ENCODE measurements at regions of chr7 and their contacts with region 1.

Region 1: GRCh38 chr7:100101016-100101862 is at the starts of genes AP4M1 and MCM7:
- DNase-seq: peak; percentile 98 to 100 (median 99)
- ATAC-seq: peak; percentile 95
- H3K4me3 ChIP-seq: peak within 1 kb of the TSS; percentile 98
- H3K27ac ChIP-seq: peak within 1 kb of the TSS; percentile 100
- H3K4me1 ChIP-seq: peaks cover 9 to 35% of the 10 kb centered on the region in 2 experiments; a peak in 4 of 5 replicates
- H3K27me3 ChIP-seq: no peaks in the 10 kb centered on the region
- CTCF ChIP-seq: peak in 1 of 3 experiments; percentile 7; a peak in 1 of 6 replicates
- EP300 ChIP-seq: peak; percentile 15
- POLR2A ChIP-seq: peak; percentile 96
- RAD21 ChIP-seq: no peak
- polyA plus RNA-seq, gene AP4M1: 1.3 to 3.6 TPM
- polyA plus RNA-seq, gene MCM7: 407 to 856 TPM

Region 2: DNA sequence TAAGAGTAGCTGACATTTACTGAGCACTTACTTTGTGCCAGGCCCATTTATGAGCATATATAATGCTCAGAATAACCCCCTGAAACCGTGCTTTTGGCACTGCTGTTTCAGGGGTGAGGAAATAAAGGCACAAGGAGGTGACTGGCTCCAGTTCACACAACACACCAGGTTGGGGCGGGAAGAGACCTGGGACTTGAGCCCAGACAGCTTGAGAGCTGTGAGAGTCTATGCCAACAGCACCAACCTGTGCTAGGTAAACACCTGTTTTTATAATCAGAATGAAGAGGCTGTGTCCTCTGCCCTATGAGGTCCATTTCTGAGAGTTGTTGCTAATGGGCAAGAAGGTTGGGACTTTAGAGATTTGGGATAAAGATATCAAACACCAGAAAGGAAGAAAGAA is 116.6 kb before region 1 on chr7:
- CTCF ChIA-PET with region 1: no interaction called
- POLR2A ChIA-PET with region 1: no interaction called
- in situ Hi-C with region 1: no loop called
- intact Hi-C with region 1: no loop called
- DNase-seq: no peak
- ATAC-seq: no peak
- H3K4me3 ChIP-seq: no peak overlapping the region
- H3K27ac ChIP-seq: no peak overlapping the region
- H3K4me1 ChIP-seq: peaks cover under 1% of the 10 kb centered on the region in 2 experiments; a peak in 2 of 5 replicates
- H3K27me3 ChIP-seq: peaks cover 31 to 68% of the 10 kb centered on the region in 2 experiments
- CTCF ChIP-seq: no peak
- EP300 ChIP-seq: no peak
- POLR2A ChIP-seq: no peak
- RAD21 ChIP-seq: no peak

Region 3: DNA sequence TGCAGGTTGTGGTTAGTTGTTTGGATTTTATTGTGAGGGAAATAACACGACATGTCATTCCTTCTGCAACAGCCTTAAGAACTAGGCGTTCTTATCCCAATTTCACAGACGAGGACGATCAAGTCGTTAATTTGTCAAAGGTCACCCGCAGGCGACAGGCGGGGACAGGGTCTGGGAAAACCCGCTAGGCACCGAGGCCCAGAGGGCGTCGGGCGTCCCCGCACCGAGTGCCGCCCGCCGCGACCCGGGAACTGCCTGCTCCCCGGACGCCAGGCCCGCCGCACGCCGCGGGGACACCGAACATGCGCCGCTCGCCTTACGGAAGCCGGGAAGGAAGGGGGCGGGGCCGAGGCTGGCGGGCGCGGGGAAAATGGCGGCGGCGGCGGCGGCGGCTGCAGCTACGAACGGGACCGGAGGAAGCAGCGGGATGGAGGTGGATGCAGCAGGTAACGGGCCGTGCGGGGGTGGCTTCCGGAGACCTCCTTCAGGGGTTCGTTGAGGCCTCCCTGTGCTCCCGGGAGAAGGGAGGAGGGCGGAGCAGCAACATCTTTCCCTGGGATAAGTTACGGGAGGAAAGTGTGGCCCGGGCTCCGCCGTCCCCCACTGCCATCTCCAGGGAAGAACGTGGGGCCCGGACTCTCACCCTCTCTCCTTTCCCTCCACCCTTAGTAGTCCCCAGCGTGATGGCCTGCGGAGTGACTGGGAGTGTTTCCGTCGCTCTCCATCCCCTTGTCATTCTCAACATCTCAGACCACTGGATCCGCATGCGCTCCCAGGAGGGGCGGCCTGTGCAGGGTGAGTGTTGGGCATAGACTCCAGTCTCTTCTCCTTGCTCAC is 12.4 kb before region 1 on chr7 and contains the start of gene COPS6:
- CTCF ChIA-PET with region 1: no interaction called
- POLR2A ChIA-PET with region 1: interaction called, 115 read pairs
- in situ Hi-C with region 1: no loop called
- intact Hi-C with region 1: no loop called
- DNase-seq: peak; percentile 87 to 92 (median 90)
- ATAC-seq: peak; percentile 66
- H3K4me3 ChIP-seq: peak within 1 kb of the TSS; percentile 87
- H3K27ac ChIP-seq: peak within 1 kb of the TSS; percentile 97
- H3K4me1 ChIP-seq: peaks cover 23 to 26% of the 10 kb centered on the region in 2 experiments
- H3K27me3 ChIP-seq: no peaks in the 10 kb centered on the region
- CTCF ChIP-seq: no peak
- EP300 ChIP-seq: peak; percentile 42; the same call in 1 of the 2 replicates
- POLR2A ChIP-seq: peak; percentile 93
- RAD21 ChIP-seq: no peak
- polyA plus RNA-seq, gene COPS6: 160 to 331 TPM

Region 4: DNA sequence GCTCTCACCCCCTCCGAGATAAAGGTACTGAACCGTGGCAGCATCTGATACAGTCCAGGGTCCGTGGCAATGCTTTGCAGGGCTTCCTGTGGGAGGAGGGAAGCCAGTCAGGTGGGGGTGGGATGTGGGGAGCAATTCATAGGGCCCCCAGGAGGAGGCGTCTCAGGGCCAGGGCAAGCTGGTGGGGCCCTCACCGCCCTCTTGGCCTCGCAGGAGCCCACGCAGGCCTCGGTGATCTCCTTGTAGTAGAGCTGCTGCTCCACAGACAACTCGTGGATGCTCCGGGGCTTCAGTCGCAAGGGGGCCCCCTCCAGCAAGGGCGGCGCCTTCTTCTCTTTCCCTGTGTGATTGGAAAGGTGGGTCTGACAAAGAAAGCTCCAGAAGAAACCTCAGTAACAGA is 10.7 kb after region 1 on chr7:
- CTCF ChIA-PET with region 1: no interaction called
- POLR2A ChIA-PET with region 1: interaction called, 47 read pairs
- in situ Hi-C with region 1: no loop called
- intact Hi-C with region 1: no loop called
- DNase-seq: no peak
- ATAC-seq: peak; percentile 15
- H3K4me3 ChIP-seq: no peak overlapping the region
- H3K27ac ChIP-seq: no peak overlapping the region
- H3K4me1 ChIP-seq: peaks cover 2 to 28% of the 10 kb centered on the region in 2 experiments; a peak in 4 of 5 replicates
- H3K27me3 ChIP-seq: no peaks in the 10 kb centered on the region
- CTCF ChIP-seq: peak in 2 of 3 experiments; percentile 2 to 17; a peak in 1 of 6 replicates
- EP300 ChIP-seq: no peak
- POLR2A ChIP-seq: no peak
- RAD21 ChIP-seq: no peak

Region 5: GRCh38 chr7:100119062-100119700 is 17.9 kb after region 1 on chr7 and contains the starts of genes CNPY4 and TAF6:
- CTCF ChIA-PET with region 1: no interaction called
- POLR2A ChIA-PET with region 1: interaction called, 47 read pairs
- in situ Hi-C with region 1: no loop called
- intact Hi-C with region 1: loop called (anchors 2 kb)
- DNase-seq: peak; percentile 99 to 100 (median 99)
- ATAC-seq: peak; percentile 88
- H3K4me3 ChIP-seq: peak within 1 kb of the TSS; percentile 72
- H3K27ac ChIP-seq: peak within 1 kb of the TSS; percentile 88
- H3K4me1 ChIP-seq: peaks cover 20 to 38% of the 10 kb centered on the region in 2 experiments; a peak in 4 of 5 replicates
- H3K27me3 ChIP-seq: no peaks in the 10 kb centered on the region
- CTCF ChIP-seq: no peak; a peak in 1 of 6 replicates
- EP300 ChIP-seq: no peak; the same call in 1 of the 2 replicates
- POLR2A ChIP-seq: peak; percentile 93
- RAD21 ChIP-seq: no peak
- polyA plus RNA-seq, gene CNPY4: 1.9 to 6.3 TPM
- polyA plus RNA-seq, gene TAF6: 0.78 to 0.83 TPM

Region 6: GRCh38 chr7:100126931-100127865 is 26.0 kb after region 1 on chr7 and contains the start of gene MBLAC1:
- CTCF ChIA-PET with region 1: no interaction called
- POLR2A ChIA-PET with region 1: interaction called, 45 read pairs
- in situ Hi-C with region 1: no loop called
- intact Hi-C with region 1: loop called (anchors 1 kb)
- DNase-seq: peak; percentile 90 to 96 (median 94)
- ATAC-seq: peak; percentile 70
- H3K4me3 ChIP-seq: peak within 1 kb of the TSS; percentile 74
- H3K27ac ChIP-seq: peak within 1 kb of the TSS; percentile 97
- H3K4me1 ChIP-seq: peaks cover 35 to 60% of the 10 kb centered on the region in 2 experiments
- H3K27me3 ChIP-seq: no peaks in the 10 kb centered on the region
- CTCF ChIP-seq: peak in 1 of 3 experiments; percentile 25; a peak in 1 of 6 replicates
- EP300 ChIP-seq: 0 out of 2 replicates have a peak, but pooled peaks have one; percentile 7
- POLR2A ChIP-seq: peak; percentile 92
- RAD21 ChIP-seq: no peak
- polyA plus RNA-seq, gene MBLAC1: 0.03 TPM

Region 7: DNA sequence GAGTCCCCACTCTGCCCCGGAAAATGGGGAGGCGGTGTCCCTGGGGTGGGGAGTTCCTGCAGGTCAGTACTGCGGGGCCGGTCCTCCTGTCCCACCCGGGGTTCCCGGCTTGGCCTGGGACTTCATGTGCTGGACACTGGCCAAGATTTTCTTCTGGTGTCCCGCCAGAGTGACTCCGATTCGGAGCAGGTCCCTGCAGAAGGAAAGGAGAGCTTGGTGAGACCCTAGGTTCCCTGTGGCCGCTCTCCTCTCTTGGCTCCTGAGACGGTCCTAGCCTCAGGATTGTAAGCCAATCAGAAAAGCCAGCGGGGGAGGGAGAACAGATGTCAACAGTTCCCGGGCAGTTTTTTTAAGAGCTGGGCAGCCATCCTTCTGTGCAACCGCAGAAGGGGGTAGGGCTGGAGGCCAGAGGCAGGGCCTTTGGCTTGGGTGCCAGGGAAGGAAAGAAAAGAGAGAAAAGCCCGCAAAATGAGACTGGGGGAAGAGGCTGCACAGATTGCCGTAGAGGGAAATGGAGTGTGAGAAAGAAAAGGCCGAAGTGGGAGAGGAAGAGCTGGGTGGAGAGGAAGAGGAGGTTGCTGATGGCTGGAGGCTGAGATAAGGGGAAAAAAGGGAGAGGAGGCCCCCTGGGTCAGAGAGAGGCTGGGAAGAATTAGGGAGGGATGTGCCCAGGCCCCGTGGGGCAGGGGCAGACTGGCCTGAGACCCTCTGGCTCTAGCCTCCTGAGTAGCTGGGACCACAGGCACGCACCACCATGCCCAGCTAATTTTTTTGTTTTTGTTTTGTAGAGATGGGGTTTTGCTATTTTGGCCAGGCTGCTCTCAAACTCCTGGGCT is 702.4 kb after region 1 on chr7:
- CTCF ChIA-PET with region 1: no interaction called
- POLR2A ChIA-PET with region 1: no interaction called
- in situ Hi-C with region 1: no loop called
- intact Hi-C with region 1: no loop called
- DNase-seq: peak; percentile 80 to 86 (median 84)
- ATAC-seq: peak; percentile 68
- H3K4me3 ChIP-seq: no peak overlapping the region
- H3K27ac ChIP-seq: peak overlapping the region; percentile 39; the same call in 1 of the 3 replicates
- H3K4me1 ChIP-seq: peaks cover 46 to 66% of the 10 kb centered on the region in 2 experiments
- H3K27me3 ChIP-seq: no peaks in the 10 kb centered on the region
- CTCF ChIP-seq: no peak
- EP300 ChIP-seq: peak; percentile 16; the same call in 1 of the 2 replicates
- POLR2A ChIP-seq: 0 out of 2 replicates have a peak, but pooled peaks have one; percentile 27
- RAD21 ChIP-seq: no peak

Measured in K562 (cell line).